ENCODE measurements at regions of chr12 and their contacts with region 1.

Region 1: DNA sequence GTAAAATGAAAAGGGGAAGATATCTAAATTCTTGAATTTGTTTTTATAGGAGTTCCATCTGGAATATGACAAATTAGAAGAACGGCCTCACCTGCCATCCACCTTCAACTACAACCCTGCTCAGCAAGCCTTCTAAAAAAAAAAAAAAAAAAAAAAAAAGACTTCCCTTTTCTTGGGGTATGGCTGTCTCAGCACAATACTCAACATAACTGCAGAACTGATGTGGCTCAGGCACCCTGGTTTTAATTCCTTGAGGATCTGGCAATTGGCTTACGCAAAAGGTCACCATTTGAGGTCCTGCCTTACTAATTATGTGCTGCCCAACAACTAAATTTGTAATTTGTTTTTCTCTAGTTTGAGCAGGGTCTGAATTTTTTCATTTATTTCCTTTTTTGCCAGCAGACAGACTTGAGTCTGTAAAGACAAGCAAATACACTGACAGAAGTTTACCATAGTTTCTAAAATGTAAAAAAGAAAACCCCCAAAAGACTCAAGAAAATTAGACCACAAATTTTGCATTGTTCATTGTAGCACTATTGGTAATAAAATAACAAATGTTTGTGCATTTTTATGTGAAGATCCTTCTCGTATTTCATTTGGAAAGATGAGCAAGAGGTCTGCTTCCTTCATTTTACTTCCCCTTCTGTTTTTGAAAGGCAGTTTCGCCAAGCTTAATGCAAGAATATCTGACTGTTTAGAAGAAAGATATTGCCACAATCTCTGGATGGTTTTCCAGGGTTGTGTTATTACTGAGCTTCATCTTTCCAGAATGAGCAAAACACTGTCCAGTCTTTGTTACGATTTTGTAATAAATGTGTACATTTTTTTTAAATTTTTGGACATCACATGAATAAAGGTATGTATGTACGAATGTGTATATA is 12.1 kb upstream of the KCNMB4 start:
- DNase-seq: no peak
- ATAC-seq: no peak
- H3K4me3 ChIP-seq: no peak overlapping the region
- H3K27ac ChIP-seq: peak overlapping the region in 1 of 10 donors; percentile 66
- H3K4me1 ChIP-seq: peaks cover 0 to 16% (median 0%) of the 10 kb centered on the region in 9 donors
- H3K27me3 ChIP-seq: no peaks in the 10 kb centered on the region
- CTCF ChIP-seq: no peak

Region 2: DNA sequence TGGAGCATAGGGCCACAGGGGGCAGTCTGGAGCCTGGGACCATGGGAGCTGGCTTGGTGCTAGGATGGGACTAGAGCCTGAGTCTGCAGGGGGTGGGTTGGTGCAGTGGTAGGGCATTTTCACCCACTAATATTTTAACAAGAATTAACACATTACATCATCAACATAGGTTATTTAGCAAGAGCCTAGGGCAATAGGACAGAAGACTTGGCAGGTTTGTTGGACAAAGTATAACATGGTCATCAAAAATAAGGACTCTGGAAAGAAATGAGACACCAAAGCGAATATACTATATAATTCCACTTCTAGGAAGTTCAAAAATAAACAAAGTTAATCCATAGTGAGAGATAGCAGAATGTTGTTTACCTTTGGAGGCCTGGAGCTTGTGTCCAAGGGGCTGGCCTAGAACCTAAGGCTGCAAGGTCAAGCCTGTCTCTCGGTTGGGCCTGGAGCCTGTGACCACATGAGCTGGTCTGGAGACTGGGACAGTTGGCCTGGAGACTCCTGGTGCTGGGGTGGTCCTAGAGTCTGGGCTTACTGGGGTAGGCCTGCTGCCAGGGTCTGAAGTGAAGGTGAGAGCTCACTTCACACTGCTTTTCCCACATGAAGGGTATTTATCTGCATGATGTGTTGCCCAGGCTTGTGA is 138.9 kb before region 1 on chr12:
- intact Hi-C with region 1: no loop called
- DNase-seq: no peak
- ATAC-seq: no peak
- H3K4me3 ChIP-seq: no peak overlapping the region
- H3K27ac ChIP-seq: no peak overlapping the region
- H3K4me1 ChIP-seq: no peaks in the 10 kb centered on the region
- H3K27me3 ChIP-seq: no peaks in the 10 kb centered on the region
- CTCF ChIP-seq: no peak

Region 3: GRCh38 chr12:70242695-70243509 is 111.1 kb before region 1 on chr12 and contains the start of gene CNOT2:
- intact Hi-C with region 1: loop called in 1 of 10 experiments (anchors 10 kb)
- DNase-seq: peak; percentile 90 to 92
- ATAC-seq: peak; percentile 96 to 99 (median 97)
- H3K4me3 ChIP-seq: peak within 1 kb of the TSS; percentile 65 to 96 (median 88)
- H3K27ac ChIP-seq: peak within 1 kb of the TSS; percentile 89 to 99 (median 96)
- H3K4me1 ChIP-seq: peaks cover 7 to 61% (median 43%) of the 10 kb centered on the region in 9 donors
- H3K27me3 ChIP-seq: no peaks in the 10 kb centered on the region
- CTCF ChIP-seq: peak in 1 of 9 donors; percentile 14
- total RNA-seq, gene CNOT2: 29.7 to 43.0 (median 36.4) TPM

Region 4: DNA sequence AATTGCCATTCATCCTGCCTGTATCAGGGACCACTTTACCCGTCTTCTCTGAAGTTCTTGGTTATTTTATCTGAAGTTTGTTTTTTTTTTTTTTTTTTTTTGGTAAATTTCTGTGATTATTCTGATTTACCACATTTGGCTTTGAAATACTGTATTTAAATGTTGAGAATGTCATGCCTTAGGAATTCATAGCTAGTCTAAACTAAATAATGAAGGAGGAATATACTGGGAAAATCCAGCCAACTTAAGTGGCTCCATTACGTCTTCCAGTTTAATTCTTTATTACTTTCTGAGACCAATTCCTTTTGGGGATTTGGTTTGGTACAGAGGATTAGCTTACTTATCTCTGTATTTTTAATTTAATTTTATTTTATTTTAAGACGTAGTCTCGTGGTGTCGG is 48.2 kb before region 1 on chr12:
- intact Hi-C with region 1: no loop called
- DNase-seq: no peak
- ATAC-seq: no peak
- H3K4me3 ChIP-seq: no peak overlapping the region
- H3K27ac ChIP-seq: no peak overlapping the region
- H3K4me1 ChIP-seq: peaks cover 0 to 15% (median 0%) of the 10 kb centered on the region in 9 donors
- H3K27me3 ChIP-seq: no peaks in the 10 kb centered on the region
- CTCF ChIP-seq: no peak

Measured in heart right ventricle (tissue), 16 donors.